Activated CD4-positive, alpha-beta T cell treated with anti-CD3 and anti-CD28 coated beads for 36 hours (primary cell): ENCODE measurements at regions of chr2 and their contacts with region 1.

Region 1: GRCh38 chr2:17401096-17401495 is 117.1 kb downstream of the RAD51AP2 start:
- DNase-seq: no peak
- ATAC-seq: no peak
- H3K4me3 Mint-ChIP-seq: no peak overlapping the region
- H3K27ac Mint-ChIP-seq: no peak overlapping the region
- H3K4me1 Mint-ChIP-seq: no peaks in the 10 kb centered on the region
- H3K27me3 Mint-ChIP-seq: no peaks in the 10 kb centered on the region

Region 2: GRCh38 chr2:17413036-17413435 is 11.9 kb after region 1 on chr2:
- CTCF ChIA-PET with region 1: interaction called, 3 read pairs
- POLR2A ChIA-PET with region 1: no interaction called
- intact Hi-C with region 1: loop called (anchors 1 kb)
- DNase-seq: no peak
- ATAC-seq: no peak
- H3K4me3 Mint-ChIP-seq: no peak overlapping the region
- H3K27ac Mint-ChIP-seq: no peak overlapping the region
- H3K4me1 Mint-ChIP-seq: no peaks in the 10 kb centered on the region
- H3K27me3 Mint-ChIP-seq: no peaks in the 10 kb centered on the region

Region 3: GRCh38 chr2:17429130-17429529 is 28.0 kb after region 1 on chr2:
- CTCF ChIA-PET with region 1: no interaction called
- POLR2A ChIA-PET with region 1: no interaction called
- intact Hi-C with region 1: no loop called
- DNase-seq: no peak
- ATAC-seq: no peak
- H3K4me3 Mint-ChIP-seq: no peak overlapping the region
- H3K27ac Mint-ChIP-seq: no peak overlapping the region
- H3K4me1 Mint-ChIP-seq: no peaks in the 10 kb centered on the region
- H3K27me3 Mint-ChIP-seq: no peaks in the 10 kb centered on the region

Region 4: DNA sequence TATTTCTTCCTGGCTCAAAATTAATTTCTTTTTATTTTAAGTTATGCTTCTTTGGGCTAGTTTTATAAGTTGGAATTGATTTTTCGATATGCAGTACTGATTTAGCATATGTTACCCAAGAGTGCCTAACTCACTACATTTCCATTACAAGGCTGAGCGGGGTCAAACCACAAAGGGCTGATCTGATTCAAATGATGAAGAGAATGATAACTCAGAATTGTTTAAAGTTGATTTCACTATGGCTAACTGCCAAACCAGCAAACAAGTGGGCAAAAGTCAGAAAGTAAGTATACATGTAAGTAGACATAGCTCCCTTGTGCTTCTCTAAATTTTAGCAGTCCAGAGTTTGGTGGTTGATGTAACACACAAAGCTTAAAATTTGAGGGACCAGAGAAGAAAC is 81.6 kb after region 1 on chr2:
- CTCF ChIA-PET with region 1: no interaction called
- POLR2A ChIA-PET with region 1: no interaction called
- intact Hi-C with region 1: no loop called
- DNase-seq: no peak
- ATAC-seq: no peak
- H3K4me3 Mint-ChIP-seq: no peak overlapping the region
- H3K27ac Mint-ChIP-seq: no peak overlapping the region
- H3K4me1 Mint-ChIP-seq: no peaks in the 10 kb centered on the region
- H3K27me3 Mint-ChIP-seq: no peaks in the 10 kb centered on the region

Region 5: GRCh38 chr2:17495590-17495989 is 94.5 kb after region 1 on chr2:
- CTCF ChIA-PET with region 1: no interaction called
- POLR2A ChIA-PET with region 1: no interaction called
- intact Hi-C with region 1: no loop called
- DNase-seq: no peak
- ATAC-seq: no peak
- H3K4me3 Mint-ChIP-seq: no peak overlapping the region
- H3K27ac Mint-ChIP-seq: no peak overlapping the region
- H3K4me1 Mint-ChIP-seq: no peaks in the 10 kb centered on the region
- H3K27me3 Mint-ChIP-seq: no peaks in the 10 kb centered on the region